HepG2 (cell line): ENCODE measurements at regions of chr1 and their contacts with region 1.

Region 1: DNA sequence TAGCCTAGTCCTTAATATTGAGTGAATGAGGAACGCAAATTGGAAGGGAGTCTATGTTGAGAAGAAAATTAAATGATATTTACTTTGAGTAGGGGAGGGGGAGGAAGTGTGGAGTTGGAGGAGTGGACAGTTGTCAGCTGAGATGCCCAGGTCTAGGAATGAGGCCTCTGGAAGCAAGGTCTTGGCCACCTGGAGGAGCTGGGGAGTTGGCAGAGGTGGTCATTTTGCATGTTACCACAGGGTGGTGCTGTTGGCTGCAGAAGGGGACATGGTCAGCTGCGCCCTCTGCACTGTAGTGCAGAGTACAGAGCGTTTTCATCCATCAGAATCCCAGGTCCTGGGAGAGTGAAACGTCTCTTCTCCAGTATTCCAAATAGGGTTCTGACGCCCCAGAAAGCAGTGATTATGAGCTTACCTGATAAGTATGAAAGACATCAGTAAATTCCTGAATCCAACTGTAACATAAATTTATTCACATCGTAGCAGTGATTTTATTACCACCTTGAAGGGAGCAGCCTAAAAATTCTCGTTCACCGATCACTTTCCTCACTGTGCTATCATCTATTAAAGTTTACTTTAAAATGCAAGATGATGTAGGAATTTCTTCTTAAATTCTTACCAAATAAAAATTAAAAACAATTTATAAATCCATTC is 13.8 kb downstream of the PARK7 start:
- DNase-seq: peak; percentile 76
- ATAC-seq: peak; percentile 100
- H3K4me3 ChIP-seq: no peak overlapping the region
- H3K27ac ChIP-seq: no peak overlapping the region
- H3K4me1 ChIP-seq: no peaks in the 10 kb centered on the region
- H3K27me3 ChIP-seq: no peaks in the 10 kb centered on the region
- CTCF ChIP-seq: peak; percentile 97
- EP300 ChIP-seq: no peak; a peak in 1 of 4 replicates
- POLR2A ChIP-seq: 0 out of 4 replicates have a peak, but pooled peaks of 1 of the 2 experiments have one; percentile 23
- RAD21 ChIP-seq: peak; percentile 96

Region 2: DNA sequence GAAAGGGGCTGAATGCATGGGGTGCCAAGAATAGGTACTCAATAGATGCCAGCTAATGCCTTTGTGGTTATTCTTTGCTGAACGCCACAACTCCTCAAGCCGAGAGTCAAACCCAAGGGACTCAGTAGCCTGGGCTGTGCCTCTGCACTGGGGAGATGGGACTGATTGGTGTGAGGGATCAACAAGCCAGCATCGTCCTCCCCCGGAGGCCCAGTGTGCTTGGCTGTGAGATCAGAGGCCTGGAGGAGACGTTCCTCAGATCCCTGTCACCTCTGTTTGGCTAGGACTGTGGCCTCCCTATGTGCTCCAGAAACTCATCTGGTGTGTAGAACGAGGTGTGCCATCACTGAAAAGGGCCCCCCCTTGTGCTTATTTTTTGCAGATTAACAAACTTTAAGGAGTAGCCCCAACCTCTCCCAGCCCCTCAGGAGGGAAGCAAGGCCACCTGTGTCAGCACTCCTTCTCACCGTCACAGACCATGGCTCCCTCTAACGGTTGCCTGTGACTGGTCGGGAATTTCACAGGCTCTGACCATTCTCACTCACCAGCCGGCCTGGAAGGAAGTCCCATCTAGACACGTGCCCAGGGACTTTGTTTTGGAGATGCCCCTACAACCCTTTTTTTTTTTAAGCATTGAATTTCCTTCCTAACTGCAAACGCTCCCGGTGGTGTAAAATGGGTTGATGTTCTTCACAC is 398.2 kb before region 1 on chr1:
- CTCF ChIA-PET with region 1: no interaction called
- POLR2A ChIA-PET with region 1: no interaction called
- in situ Hi-C with region 1: no loop called
- intact Hi-C with region 1: no loop called
- DNase-seq: no peak
- ATAC-seq: peak; percentile 55
- H3K4me3 ChIP-seq: no peak overlapping the region
- H3K27ac ChIP-seq: no peak overlapping the region
- H3K4me1 ChIP-seq: no peaks in the 10 kb centered on the region
- H3K27me3 ChIP-seq: peaks cover 5 to 44% of the 10 kb centered on the region in 2 experiments; a peak in 3 of 5 replicates
- CTCF ChIP-seq: peak; percentile 52
- EP300 ChIP-seq: no peak
- POLR2A ChIP-seq: no peak
- RAD21 ChIP-seq: no peak

Region 3: DNA sequence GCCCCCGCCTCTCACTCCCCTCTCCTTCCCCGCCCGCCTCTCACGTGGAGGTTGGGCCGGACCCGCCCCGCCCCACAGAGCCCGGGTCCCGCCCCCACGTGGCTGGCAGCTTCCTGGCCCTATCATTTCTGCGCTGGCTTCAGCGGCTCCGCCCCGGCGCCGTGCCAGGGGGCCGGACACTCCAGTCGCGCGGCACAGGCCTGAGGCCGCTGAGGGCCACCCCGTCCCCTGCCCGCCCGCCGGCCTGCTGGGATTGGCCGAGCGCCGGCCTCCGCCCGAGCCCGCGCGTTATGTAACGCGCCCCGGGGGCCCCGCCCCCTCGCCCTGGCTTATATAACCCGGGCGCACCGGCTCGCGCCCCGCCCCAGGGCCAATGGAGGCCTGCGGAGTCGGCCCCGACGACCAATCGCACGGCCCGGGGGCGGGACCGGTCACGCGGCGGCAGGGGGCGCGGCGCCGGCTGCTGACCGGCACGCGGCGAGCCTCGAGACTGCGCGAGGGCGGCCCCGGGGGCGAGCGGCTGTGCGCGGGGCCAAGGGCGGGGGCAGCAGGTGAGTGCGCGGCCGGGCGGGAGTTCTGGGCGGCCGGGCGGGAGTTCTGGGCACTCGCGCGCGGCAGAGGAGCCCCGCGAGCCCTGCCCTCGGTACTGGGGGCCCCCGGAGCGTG is 191.4 kb before region 1 on chr1 and contains the start of gene PER3:
- CTCF ChIA-PET with region 1: no interaction called
- POLR2A ChIA-PET with region 1: no interaction called
- in situ Hi-C with region 1: no loop called
- intact Hi-C with region 1: no loop called
- DNase-seq: peak; percentile 87
- ATAC-seq: peak; percentile 99
- H3K4me3 ChIP-seq: peak within 1 kb of the TSS; percentile 60 to 68 (median 64); a peak in 5 of 6 replicates
- H3K27ac ChIP-seq: peak within 1 kb of the TSS; percentile 52
- H3K4me1 ChIP-seq: peaks cover 17% of the 10 kb centered on the region
- H3K27me3 ChIP-seq: no peaks in the 10 kb centered on the region
- CTCF ChIP-seq: no peak
- EP300 ChIP-seq: peak in 1 of 2 experiments; percentile 14; a peak in 1 of 4 replicates
- POLR2A ChIP-seq: no peak
- RAD21 ChIP-seq: no peak
- total RNA-seq, gene PER3: 3.0 and 3.3 TPM in 2 replicates

Region 4: DNA sequence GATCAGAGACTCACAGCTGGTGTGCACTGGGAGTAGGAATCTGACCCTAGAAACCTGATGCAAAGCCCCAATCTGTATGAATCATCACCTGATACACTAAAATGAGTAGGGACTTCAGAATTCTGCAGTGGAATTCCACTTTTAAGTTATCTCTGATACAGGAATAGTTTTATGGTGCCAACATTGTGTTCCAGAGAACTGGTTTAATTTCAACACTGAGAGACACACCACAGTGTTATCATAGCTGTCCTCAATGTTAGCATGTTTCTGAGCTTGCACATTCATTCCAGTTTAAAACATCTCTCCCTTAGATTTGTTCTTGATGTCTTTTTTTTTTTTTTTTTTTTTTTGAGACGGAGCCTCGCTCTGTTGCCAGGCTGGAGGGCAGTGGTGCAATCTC is 129.6 kb before region 1 on chr1:
- CTCF ChIA-PET with region 1: no interaction called
- POLR2A ChIA-PET with region 1: no interaction called
- in situ Hi-C with region 1: no loop called
- intact Hi-C with region 1: no loop called
- DNase-seq: no peak
- ATAC-seq: no peak
- H3K4me3 ChIP-seq: no peak overlapping the region
- H3K27ac ChIP-seq: no peak overlapping the region
- H3K4me1 ChIP-seq: no peaks in the 10 kb centered on the region
- H3K27me3 ChIP-seq: 0 out of 5 replicates have a peak, but pooled peaks cover 0 to 4% of the 10 kb centered on the region in 2 experiments
- CTCF ChIP-seq: no peak
- EP300 ChIP-seq: no peak
- POLR2A ChIP-seq: no peak
- RAD21 ChIP-seq: no peak

Region 5: GRCh38 chr1:7922301-7922700 is 53.0 kb before region 1 on chr1:
- CTCF ChIA-PET with region 1: no interaction called
- POLR2A ChIA-PET with region 1: no interaction called
- in situ Hi-C with region 1: no loop called
- intact Hi-C with region 1: no loop called
- DNase-seq: no peak
- ATAC-seq: no peak
- H3K4me3 ChIP-seq: no peak overlapping the region
- H3K27ac ChIP-seq: no peak overlapping the region
- H3K4me1 ChIP-seq: no peaks in the 10 kb centered on the region
- H3K27me3 ChIP-seq: peaks cover 0 to 5% of the 10 kb centered on the region in 2 experiments; a peak in 2 of 5 replicates
- CTCF ChIP-seq: no peak
- EP300 ChIP-seq: no peak
- POLR2A ChIP-seq: no peak
- RAD21 ChIP-seq: no peak

Region 6: DNA sequence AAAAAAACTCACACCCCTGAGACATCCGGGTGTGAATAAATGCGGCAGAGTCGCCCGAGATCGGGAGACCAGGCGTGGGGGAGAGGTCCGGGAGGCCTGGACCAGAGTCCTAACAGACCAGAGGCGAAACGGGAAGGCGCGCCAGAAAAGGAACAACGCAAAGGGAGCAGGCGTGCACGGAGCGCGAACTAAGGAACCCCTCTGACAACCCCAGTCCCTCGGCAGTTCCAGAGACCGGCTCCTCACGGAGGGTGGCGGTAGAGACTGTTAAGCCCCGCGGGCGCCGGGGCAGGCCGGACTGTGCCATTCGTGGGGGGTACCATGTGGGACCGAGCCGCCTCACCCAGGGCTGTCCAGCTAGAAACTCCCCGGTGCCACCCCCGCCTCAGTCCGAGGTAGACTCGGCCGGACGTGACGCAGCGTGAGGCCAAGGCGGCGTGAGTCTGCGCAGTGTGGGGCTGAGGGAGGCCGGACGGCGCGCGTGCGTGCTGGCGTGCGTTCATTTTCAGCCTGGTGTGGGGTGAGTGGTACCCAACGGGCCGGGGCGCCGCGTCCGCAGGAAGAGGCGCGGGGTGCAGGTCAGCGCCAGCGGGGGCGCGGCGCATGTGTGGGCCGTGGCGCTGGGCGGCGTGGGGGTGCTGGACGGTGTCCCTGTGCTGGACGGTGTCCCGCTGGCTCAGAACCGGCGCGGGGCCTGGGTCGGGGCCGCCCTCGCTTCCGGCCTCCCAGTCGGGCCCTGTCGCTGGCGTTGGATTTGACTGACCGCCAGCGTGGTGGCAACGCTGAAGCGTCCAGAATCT is 13.9 kb before region 1 on chr1 and contains the start of gene PARK7:
- CTCF ChIA-PET with region 1: no interaction called
- POLR2A ChIA-PET with region 1: interaction called, 15 read pairs
- in situ Hi-C with region 1: no loop called
- intact Hi-C with region 1: no loop called
- DNase-seq: peak; percentile 96
- ATAC-seq: peak; percentile 99
- H3K4me3 ChIP-seq: peak within 1 kb of the TSS; percentile 83 to 95 (median 88)
- H3K27ac ChIP-seq: peak within 1 kb of the TSS; percentile 76
- H3K4me1 ChIP-seq: peaks cover 52% of the 10 kb centered on the region
- H3K27me3 ChIP-seq: no peaks in the 10 kb centered on the region
- CTCF ChIP-seq: peak; percentile 77
- EP300 ChIP-seq: no peak
- POLR2A ChIP-seq: peak; percentile 92 to 96
- RAD21 ChIP-seq: peak; percentile 52
- total RNA-seq, gene PARK7: 296 and 409 TPM in 2 replicates

Region 7: DNA sequence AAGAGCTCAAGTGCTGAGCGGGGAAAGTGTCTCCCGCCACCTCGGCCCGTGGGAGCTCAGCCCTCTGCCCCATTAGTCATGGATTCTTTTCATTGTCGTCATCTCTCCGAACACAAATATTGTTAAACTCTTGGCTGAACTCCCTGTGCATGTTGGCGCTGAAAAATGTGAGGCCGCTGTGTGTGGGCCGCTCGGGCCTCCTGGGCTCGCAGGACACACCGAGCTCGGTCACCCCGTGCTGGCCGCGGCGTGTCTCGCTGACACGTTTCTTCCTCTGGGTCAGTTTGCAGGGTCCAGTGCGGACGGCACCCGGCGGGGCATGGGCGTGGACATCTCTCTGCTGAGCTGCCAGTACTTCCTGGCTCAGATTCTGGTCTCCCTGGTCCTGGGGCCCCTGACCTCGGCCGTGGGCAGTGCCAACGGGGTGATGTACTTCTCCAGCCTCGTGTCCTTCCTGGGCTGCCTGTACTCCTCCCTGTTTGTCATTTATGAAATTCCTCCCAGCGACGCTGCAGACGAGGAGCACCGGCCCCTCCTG is 368.2 kb after region 1 on chr1:
- CTCF ChIA-PET with region 1: interaction called, 39 read pairs
- POLR2A ChIA-PET with region 1: interaction called, 4 read pairs
- in situ Hi-C with region 1: loop called (anchors 5 kb)
- intact Hi-C with region 1: no loop called
- DNase-seq: peak; percentile 67
- ATAC-seq: peak; percentile 40
- H3K4me3 ChIP-seq: peak overlapping the region; percentile 40 to 68 (median 43); a peak in 5 of 6 replicates
- H3K27ac ChIP-seq: no peak overlapping the region
- H3K4me1 ChIP-seq: peaks cover 47% of the 10 kb centered on the region
- H3K27me3 ChIP-seq: peaks cover 5 to 49% of the 10 kb centered on the region in 2 experiments
- CTCF ChIP-seq: no peak; the same call in 1 of the 2 replicates
- EP300 ChIP-seq: no peak
- POLR2A ChIP-seq: no peak
- RAD21 ChIP-seq: no peak; the same call in 1 of the 2 replicates

Region 8: GRCh38 chr1:8348777-8349491 is 373.6 kb after region 1 on chr1:
- CTCF ChIA-PET with region 1: interaction called, 39 read pairs
- POLR2A ChIA-PET with region 1: interaction called, 3 read pairs
- in situ Hi-C with region 1: loop called (anchors 5 kb)
- intact Hi-C with region 1: loop called (anchors 1 kb)
- DNase-seq: peak; percentile 48
- ATAC-seq: peak; percentile 60
- H3K4me3 ChIP-seq: peak overlapping the region in 1 of 3 experiments; percentile 50; a peak in 1 of 6 replicates
- H3K27ac ChIP-seq: no peak overlapping the region
- H3K4me1 ChIP-seq: peaks cover 32% of the 10 kb centered on the region
- H3K27me3 ChIP-seq: peaks cover 0 to 20% of the 10 kb centered on the region in 2 experiments; a peak in 4 of 5 replicates
- CTCF ChIP-seq: peak; percentile 92
- EP300 ChIP-seq: no peak
- POLR2A ChIP-seq: no peak
- RAD21 ChIP-seq: peak; percentile 87